Activated CD4-positive, alpha-beta memory T cell treated with anti-CD3 and anti-CD28 coated beads for 36 hours (primary cell): ENCODE measurements at regions of chr2 and their contacts with region 1.

Region 1: DNA sequence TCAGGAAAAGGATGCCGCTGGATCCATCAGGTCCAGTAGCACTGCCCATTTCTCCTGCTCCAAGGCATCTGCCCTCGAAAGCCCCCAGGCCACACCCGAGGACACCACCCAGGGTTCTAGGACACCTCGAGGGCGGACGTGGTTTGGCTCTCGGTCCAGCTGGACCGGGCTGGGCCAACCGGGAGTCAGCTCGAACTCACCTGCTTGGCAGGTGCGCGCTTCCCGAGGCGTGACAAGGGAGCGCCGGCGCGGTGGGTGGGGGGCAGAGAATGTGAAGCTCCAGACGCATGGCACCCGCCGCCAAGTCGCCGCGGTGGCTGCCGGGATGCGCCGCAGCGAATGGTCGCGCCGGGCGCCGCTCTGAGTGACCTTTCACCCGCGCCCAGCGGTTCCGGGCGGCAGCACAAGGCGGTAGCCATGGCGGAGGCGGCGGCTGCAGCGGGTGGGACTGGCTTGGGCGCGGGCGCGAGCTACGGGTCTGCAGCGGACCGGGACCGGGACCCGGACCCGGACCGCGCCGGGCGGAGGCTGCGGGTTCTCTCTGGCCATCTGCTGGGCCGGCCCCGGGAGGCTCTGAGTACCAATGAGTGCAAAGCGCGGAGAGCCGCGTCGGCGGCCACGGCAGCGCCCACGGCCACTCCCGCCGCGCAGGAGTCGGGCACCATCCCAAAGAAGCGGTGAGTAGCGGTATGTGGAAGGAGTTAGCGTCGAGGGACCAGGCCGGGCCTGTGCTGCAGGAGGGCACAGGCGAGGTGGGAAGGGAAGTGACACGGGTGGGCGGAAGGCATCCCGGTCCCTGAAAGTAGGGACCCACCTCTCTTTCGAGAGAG is at the start of gene AGPS:
- DNase-seq: peak; percentile 88
- H3K4me3 Mint-ChIP-seq: peak within 1 kb of the TSS; percentile 87
- H3K27ac Mint-ChIP-seq: peak within 1 kb of the TSS; percentile 70
- H3K4me1 Mint-ChIP-seq: peaks cover 56% of the 10 kb centered on the region
- H3K27me3 Mint-ChIP-seq: no peaks in the 10 kb centered on the region
- total RNA-seq, gene AGPS: 51.9 to 53.0 TPM

Region 2: DNA sequence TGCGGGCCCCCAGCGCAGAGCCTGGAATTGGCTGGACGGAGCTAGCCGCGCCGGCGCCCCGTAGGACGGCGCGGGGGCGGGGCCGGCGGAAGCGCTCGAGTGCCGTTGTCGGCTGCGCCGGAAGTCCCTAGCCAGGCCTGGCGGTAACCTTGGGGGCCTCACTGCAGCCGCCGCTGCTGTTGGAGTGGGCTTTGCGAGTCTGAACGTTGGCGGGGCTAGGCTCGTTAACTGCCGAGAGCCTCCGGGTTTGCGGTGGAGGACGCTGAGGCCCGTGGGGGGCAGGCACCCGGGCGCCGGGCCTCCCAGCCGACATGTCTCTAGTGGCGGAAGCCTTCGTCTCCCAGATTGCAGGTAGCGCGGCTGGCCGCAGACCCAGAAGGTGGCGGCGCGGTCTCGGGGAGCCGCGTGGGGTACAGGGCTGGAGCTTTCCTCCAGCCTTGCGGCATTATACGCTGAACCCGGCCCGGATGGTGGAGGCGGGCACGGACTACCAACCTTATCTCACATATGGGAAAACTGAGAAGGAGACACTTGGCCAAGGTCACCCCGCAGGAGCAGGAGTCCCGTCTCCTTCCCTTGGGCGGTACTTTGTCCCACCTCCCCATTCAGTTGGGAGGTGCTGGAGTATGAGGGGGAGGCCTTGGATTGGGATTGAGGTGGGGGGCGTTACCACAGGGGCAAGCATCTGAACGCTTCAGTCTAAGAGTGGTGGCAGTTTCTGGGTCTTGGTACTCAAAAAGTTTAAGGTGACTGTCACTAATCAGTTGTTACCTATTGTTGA is 1123.1 kb before region 1 on chr2 and contains the start of gene MTX2:
- CTCF ChIA-PET with region 1: no interaction called
- POLR2A ChIA-PET with region 1: no interaction called
- intact Hi-C with region 1: loop called (anchors 5 kb)
- DNase-seq: peak; percentile 79
- H3K4me3 Mint-ChIP-seq: peak within 1 kb of the TSS; percentile 98
- H3K27ac Mint-ChIP-seq: peak within 1 kb of the TSS; percentile 84
- H3K4me1 Mint-ChIP-seq: peaks cover 16% of the 10 kb centered on the region
- H3K27me3 Mint-ChIP-seq: peaks cover 2% of the 10 kb centered on the region
- total RNA-seq, gene MTX2: 25.8 to 28.2 TPM

Region 3: DNA sequence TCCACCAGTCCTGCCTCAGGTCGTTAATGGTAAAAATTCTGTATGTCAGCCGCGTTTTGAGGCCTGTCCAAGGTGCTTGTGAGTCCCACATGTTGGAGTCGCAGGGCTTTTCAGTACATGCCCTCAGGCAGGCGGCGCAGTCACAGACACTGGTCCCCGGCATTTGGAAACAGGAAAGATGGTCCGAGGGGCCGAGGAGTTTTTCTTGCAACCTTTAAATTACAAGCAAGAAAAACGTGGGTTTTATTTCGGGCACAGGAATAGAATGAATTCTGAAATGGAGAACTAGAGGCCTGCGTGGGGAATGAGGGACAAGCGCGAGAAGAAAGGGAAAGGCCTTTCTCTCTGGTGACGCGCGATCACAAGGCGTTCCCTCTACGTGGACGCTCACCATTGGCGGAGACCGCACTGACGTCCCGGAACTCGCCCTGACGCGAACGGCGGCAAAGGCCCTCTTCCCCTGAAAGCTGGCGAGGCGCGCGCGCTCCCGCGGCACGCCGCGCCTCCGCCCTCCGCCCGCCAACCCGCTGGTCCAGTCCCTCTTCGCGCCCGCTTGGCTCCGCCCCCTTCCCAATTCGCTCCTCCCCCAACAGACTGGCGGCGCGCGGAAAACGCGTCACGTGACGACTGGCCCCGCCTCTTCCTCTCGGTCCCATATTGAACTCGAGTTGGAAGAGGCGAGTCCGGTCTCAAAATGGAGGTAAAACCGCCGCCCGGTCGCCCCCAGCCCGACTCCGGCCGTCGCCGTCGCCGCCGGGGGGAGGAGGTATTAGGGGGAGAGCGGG is 180.3 kb before region 1 on chr2 and contains the start of gene HNRNPA3:
- CTCF ChIA-PET with region 1: interaction called, 3 read pairs
- POLR2A ChIA-PET with region 1: interaction called, 3 read pairs
- intact Hi-C with region 1: loop called (anchors 1 kb)
- DNase-seq: peak; percentile 100
- H3K4me3 Mint-ChIP-seq: peak within 1 kb of the TSS; percentile 97
- H3K27ac Mint-ChIP-seq: peak within 1 kb of the TSS; percentile 100
- H3K4me1 Mint-ChIP-seq: peaks cover 35% of the 10 kb centered on the region
- H3K27me3 Mint-ChIP-seq: no peaks in the 10 kb centered on the region
- total RNA-seq, gene HNRNPA3: 303 to 311 TPM

Region 4: DNA sequence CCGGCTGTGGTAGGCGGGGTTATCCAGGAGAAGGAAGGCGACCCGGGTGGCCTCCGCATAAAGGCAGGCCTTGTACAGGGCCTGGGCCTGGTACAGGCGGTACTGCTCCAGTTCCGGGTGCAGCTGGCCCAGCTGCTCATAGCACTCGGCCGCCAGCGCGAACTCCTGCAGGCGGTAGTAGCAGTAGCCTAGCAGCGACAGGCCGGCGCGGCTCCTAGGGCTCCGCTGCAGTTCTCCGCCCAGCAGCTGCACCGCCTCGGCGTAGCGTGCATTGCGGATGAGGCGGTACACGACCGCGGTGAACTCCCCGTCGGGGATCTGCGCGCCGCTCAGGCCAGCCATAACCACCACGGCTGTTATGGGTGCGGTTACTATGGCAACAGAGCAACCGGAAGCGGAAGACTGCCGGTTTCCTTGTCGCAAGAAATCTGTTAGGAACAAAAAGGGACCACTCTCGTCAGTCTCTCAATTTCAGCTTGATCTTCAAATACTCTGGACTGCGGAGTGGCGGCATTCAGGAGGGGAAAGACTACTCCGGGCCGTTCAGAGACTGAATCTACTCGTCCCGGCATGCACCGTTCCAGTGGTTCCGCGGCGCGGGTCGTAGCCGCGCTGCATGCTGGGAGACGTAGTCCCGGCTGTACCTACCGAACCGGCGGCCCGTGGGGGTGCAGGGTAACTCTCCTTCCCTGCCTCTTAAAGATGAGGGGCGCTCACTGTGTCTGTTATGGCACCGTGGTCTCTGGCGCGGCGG is 160.0 kb after region 1 on chr2:
- CTCF ChIA-PET with region 1: no interaction called
- POLR2A ChIA-PET with region 1: interaction called, 5 read pairs
- intact Hi-C with region 1: loop called (anchors 2 kb)
- DNase-seq: peak; percentile 93
- H3K4me3 Mint-ChIP-seq: peak overlapping the region; percentile 97
- H3K27ac Mint-ChIP-seq: peak overlapping the region; percentile 100
- H3K4me1 Mint-ChIP-seq: peaks cover 8% of the 10 kb centered on the region
- H3K27me3 Mint-ChIP-seq: no peaks in the 10 kb centered on the region

Region 5: GRCh38 chr2:177783835-177784744 is 391.5 kb after region 1 on chr2:
- CTCF ChIA-PET with region 1: no interaction called
- POLR2A ChIA-PET with region 1: no interaction called
- intact Hi-C with region 1: loop called (anchors 1 kb)
- DNase-seq: peak; percentile 34
- H3K4me3 Mint-ChIP-seq: peak overlapping the region; percentile 36
- H3K27ac Mint-ChIP-seq: peak overlapping the region; percentile 81
- H3K4me1 Mint-ChIP-seq: peaks cover 41% of the 10 kb centered on the region
- H3K27me3 Mint-ChIP-seq: no peaks in the 10 kb centered on the region